Activated B cell treated with CpG ODN at 0.5 μM for 24 hours (primary cell): ENCODE measurements at regions of chr22 and their contacts with region 1.

Region 1: DNA sequence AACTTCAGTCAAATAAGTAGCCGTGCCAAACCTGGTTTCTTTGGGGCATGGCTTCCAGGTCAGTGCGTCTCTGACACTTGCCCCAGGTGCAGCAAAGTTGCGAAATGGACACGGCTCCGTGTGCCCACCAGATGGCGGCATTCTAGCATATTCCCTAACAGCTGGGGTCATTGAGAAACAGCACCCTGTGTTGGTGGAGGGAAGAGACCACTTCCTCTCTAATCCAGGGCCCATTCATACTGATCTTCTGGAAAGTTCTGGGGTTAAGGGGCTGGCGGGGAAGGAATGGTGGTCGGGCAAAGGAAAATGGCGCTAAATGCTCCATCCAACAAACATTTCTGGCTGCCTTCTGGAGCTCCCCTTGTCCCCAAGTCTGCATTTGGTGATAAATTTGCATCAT is 141.2 kb upstream of the TIMP3 start:
- DNase-seq: peak; percentile 18
- ATAC-seq: no peak
- H3K4me3 Mint-ChIP-seq: no peak overlapping the region
- H3K27ac Mint-ChIP-seq: no peak overlapping the region
- H3K4me1 Mint-ChIP-seq: no peaks in the 10 kb centered on the region
- H3K27me3 Mint-ChIP-seq: no peaks in the 10 kb centered on the region
- CTCF ChIP-seq: no peak

Region 2: GRCh38 chr22:32644252-32645100 is 15.8 kb before region 1 on chr22:
- CTCF ChIA-PET with region 1: no interaction called
- POLR2A ChIA-PET with region 1: no interaction called
- intact Hi-C with region 1: no loop called
- DNase-seq: no peak
- ATAC-seq: no peak
- H3K4me3 Mint-ChIP-seq: no peak overlapping the region
- H3K27ac Mint-ChIP-seq: no peak overlapping the region
- H3K4me1 Mint-ChIP-seq: peaks cover 9% of the 10 kb centered on the region
- H3K27me3 Mint-ChIP-seq: no peaks in the 10 kb centered on the region
- CTCF ChIP-seq: no peak

Region 3: DNA sequence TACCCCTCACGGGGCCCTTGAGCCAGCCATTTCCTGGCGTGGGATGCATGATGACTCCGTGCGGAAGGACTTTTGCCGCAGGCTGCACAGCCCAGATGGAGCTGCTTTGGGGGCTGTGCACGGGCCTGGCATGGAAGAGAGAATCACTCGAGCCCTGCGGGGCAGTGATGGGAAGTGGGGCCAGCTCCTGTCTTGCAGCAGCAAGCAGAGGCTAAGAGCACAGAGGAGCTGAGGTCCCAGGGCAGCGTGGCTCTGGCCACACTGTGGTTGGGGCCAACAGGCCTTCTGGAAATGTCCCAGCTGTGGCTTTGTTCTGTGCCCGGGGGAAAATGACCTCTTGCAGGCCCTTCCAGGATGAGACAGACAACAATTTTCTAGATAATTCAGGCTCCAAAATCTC is 48.5 kb after region 1 on chr22:
- CTCF ChIA-PET with region 1: no interaction called
- POLR2A ChIA-PET with region 1: no interaction called
- intact Hi-C with region 1: no loop called
- DNase-seq: no peak
- ATAC-seq: no peak
- H3K4me3 Mint-ChIP-seq: no peak overlapping the region
- H3K27ac Mint-ChIP-seq: no peak overlapping the region
- H3K4me1 Mint-ChIP-seq: no peaks in the 10 kb centered on the region
- H3K27me3 Mint-ChIP-seq: peaks cover 3% of the 10 kb centered on the region
- CTCF ChIP-seq: no peak

Region 4: GRCh38 chr22:32775957-32776356 is 115.7 kb after region 1 on chr22:
- CTCF ChIA-PET with region 1: no interaction called
- POLR2A ChIA-PET with region 1: no interaction called
- intact Hi-C with region 1: no loop called
- DNase-seq: no peak
- ATAC-seq: no peak
- H3K4me3 Mint-ChIP-seq: no peak overlapping the region
- H3K27ac Mint-ChIP-seq: no peak overlapping the region
- H3K4me1 Mint-ChIP-seq: no peaks in the 10 kb centered on the region
- H3K27me3 Mint-ChIP-seq: peaks cover 7% of the 10 kb centered on the region
- CTCF ChIP-seq: no peak

Region 5: GRCh38 chr22:32796865-32797573 is 136.7 kb after region 1 on chr22:
- CTCF ChIA-PET with region 1: interaction called, 15 read pairs
- POLR2A ChIA-PET with region 1: no interaction called
- intact Hi-C with region 1: loop called (anchors 2 kb)
- DNase-seq: no peak
- ATAC-seq: no peak
- H3K4me3 Mint-ChIP-seq: no peak overlapping the region
- H3K27ac Mint-ChIP-seq: no peak overlapping the region
- H3K4me1 Mint-ChIP-seq: peaks cover 4% of the 10 kb centered on the region
- H3K27me3 Mint-ChIP-seq: peaks cover 26% of the 10 kb centered on the region
- CTCF ChIP-seq: no peak

Region 6: DNA sequence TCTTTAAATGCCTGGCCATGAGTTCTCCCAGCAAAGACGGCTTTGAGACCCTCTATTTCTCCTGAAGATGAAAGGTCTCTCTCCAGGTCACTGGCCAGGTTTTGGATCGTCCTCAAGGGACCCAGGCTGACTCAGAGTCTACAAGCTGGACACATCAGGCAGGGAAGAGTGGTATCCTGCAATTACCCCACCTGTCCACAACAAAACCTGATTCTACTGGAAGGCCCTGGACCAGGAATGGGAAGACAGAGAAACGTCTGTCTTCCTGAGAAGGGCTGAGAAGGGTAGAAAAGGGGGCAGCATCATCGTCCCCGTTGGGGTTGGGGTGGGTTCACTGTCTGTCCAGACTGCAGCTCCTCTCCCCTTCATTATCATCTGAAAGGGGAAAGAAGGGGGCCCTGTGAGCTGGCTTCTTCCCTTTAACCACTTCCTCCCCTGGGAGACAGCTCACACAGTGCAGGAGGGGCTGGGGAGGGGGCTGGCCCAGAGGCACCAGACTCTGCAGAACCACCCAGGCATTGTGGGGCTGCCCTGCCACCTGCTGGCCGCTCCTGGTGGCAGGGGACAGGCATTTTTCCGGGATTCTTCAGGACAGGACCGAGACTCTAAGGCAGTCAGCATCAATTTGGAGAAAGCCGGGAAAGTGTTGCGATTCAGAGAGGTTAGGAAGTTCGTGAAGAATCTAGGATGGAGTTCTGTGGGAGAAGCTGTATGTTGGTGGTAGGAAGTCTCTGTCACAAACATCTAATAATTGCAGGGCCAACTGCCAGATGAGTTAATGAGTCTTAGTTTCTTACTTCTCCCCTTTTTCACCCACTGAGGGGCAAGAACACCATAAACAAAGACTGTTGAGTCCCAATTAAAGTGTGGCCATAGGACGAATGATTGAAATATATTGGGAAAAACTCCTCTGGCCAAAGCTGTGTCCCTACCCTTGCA is 340.3 kb after region 1 on chr22:
- CTCF ChIA-PET with region 1: interaction called, 4 read pairs
- POLR2A ChIA-PET with region 1: no interaction called
- intact Hi-C with region 1: loop called (anchors 1 kb)
- DNase-seq: peak; percentile 33
- ATAC-seq: peak; percentile 56
- H3K4me3 Mint-ChIP-seq: no peak overlapping the region
- H3K27ac Mint-ChIP-seq: no peak overlapping the region
- H3K4me1 Mint-ChIP-seq: peaks cover 2% of the 10 kb centered on the region
- H3K27me3 Mint-ChIP-seq: peaks cover 15% of the 10 kb centered on the region
- CTCF ChIP-seq: no peak